ENCODE measurements at regions of chr16 and their contacts with region 1.

Region 1: GRCh38 chr16:86575754-86576557 is 2.4 kb upstream of the FOXL1 start:
- DNase-seq: peak; percentile 94
- H3K4me3 ChIP-seq: peak overlapping the region; percentile 76
- H3K27ac ChIP-seq: peak overlapping the region; percentile 95
- H3K27me3 ChIP-seq: no peaks in the 10 kb centered on the region
- CTCF ChIP-seq: peak; percentile 87

Region 2: GRCh38 chr16:86761111-86762031 is 185.4 kb after region 1 on chr16:
- in situ Hi-C with region 1: loop called (anchors 25 kb)
- DNase-seq: peak; percentile 79
- H3K4me3 ChIP-seq: peak overlapping the region; percentile 29
- H3K27ac ChIP-seq: peak overlapping the region; percentile 24
- H3K27me3 ChIP-seq: no peaks in the 10 kb centered on the region
- CTCF ChIP-seq: peak; percentile 94